ENCODE measurements at regions of chr5 and their contacts with region 1.

Region 1: DNA sequence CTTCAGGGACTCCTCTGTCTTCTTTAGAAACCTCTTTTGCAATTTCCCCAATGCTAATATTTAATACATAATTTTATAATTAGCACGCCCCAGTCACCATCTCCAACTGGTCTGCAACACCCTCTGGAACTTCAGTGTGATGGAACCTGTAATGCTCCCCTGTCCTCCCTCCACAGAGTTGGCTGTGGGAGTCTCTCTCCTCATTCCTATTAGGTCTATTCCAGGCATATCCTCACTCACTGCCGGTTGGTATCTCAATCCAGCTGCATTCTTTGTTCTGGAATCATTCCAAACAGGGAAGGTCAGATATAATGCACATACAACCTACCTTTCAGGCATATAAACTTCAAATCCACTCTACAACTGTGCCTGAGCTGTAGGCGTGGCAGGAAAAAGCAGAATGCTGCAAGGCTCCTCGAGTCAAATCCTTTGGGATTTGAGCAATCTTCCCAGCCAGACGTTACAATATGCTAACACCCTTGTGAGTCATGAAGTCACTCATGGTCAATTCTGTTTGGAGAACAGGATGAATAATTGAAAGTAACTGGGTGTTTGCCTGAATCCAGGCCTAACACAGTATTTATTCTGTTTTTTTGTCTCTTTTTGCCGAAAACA is 293.8 kb downstream of the CWC27 start:
- DNase-seq: peak in 1 of 2 donors; percentile 72
- ATAC-seq: peak; percentile 88
- H3K4me3 ChIP-seq: no peak overlapping the region
- H3K27ac ChIP-seq: peak overlapping the region; percentile 96 to 98
- H3K4me1 ChIP-seq: peaks cover 5 to 16% of the 10 kb centered on the region in 2 donors
- H3K27me3 ChIP-seq: no peaks in the 10 kb centered on the region

Region 2: GRCh38 chr5:65035211-65036206 is 27.1 kb before region 1 on chr5:
- intact Hi-C with region 1: loop called in 1 of 2 experiments (anchors 2 kb)
- DNase-seq: peak; percentile 94 to 96
- ATAC-seq: peak; percentile 95
- H3K4me3 ChIP-seq: peak overlapping the region; percentile 7 to 10
- H3K27ac ChIP-seq: peak overlapping the region; percentile 93 to 94
- H3K4me1 ChIP-seq: peaks cover 3% of the 10 kb centered on the region in 2 donors
- H3K27me3 ChIP-seq: no peaks in the 10 kb centered on the region

Region 3: DNA sequence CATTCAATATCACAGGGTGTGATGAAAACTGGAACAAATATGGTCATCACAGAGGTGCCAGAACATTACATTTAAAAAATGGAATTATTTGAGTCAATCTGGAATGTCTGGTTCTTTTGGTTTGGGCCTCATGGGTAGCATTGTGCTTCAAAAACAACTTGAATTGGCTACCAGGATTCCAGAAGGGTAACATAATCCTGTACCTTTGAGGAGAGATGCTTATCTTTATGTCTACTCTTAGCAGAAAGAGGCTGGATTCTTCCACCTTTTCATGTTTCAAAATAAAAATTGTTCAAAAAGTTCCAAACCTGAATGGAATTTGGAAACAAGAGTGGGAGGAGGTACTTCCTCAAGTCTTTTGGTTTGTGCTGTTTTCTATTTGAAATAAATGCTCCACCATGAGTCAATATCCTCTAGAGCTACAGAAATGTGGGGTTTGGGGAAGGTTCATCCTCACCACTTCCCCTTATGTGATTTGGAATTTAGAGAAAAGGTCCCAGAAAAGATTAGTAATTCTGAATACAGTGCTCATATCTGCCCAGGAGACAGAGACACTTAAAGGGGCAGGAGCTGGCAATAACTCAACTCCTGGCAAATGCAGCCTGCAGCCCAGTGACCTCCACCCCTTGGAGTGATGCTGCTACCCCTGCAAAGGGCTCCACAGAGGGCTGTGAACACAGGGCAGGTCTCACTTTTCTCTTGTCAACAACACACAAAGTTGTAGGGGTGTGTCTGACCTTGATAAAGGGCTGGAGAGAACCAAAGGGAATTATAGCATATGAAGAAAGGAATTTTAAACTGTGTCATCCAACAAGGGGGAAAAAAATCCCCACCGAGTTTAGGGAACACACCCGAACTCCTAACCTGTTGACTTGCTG is 21.1 kb before region 1 on chr5:
- intact Hi-C with region 1: loop called in 1 of 2 experiments (anchors 1 kb)
- DNase-seq: no peak
- ATAC-seq: no peak
- H3K4me3 ChIP-seq: no peak overlapping the region
- H3K27ac ChIP-seq: peak overlapping the region; percentile 58 to 72
- H3K4me1 ChIP-seq: peaks cover 4 to 7% of the 10 kb centered on the region in 2 donors
- H3K27me3 ChIP-seq: no peaks in the 10 kb centered on the region